A673 (cell line): ENCODE measurements at regions of chr2 and their contacts with region 1.

Region 1: GRCh38 chr2:47288864-47289263 is 114.1 kb upstream of the MSH2 start:
- DNase-seq: no peak
- H3K4me3 ChIP-seq: no peak overlapping the region
- H3K27ac ChIP-seq: no peak overlapping the region
- H3K4me1 ChIP-seq: no peaks in the 10 kb centered on the region
- H3K27me3 ChIP-seq: no peaks in the 10 kb centered on the region
- CTCF ChIP-seq: no peak

Region 2: DNA sequence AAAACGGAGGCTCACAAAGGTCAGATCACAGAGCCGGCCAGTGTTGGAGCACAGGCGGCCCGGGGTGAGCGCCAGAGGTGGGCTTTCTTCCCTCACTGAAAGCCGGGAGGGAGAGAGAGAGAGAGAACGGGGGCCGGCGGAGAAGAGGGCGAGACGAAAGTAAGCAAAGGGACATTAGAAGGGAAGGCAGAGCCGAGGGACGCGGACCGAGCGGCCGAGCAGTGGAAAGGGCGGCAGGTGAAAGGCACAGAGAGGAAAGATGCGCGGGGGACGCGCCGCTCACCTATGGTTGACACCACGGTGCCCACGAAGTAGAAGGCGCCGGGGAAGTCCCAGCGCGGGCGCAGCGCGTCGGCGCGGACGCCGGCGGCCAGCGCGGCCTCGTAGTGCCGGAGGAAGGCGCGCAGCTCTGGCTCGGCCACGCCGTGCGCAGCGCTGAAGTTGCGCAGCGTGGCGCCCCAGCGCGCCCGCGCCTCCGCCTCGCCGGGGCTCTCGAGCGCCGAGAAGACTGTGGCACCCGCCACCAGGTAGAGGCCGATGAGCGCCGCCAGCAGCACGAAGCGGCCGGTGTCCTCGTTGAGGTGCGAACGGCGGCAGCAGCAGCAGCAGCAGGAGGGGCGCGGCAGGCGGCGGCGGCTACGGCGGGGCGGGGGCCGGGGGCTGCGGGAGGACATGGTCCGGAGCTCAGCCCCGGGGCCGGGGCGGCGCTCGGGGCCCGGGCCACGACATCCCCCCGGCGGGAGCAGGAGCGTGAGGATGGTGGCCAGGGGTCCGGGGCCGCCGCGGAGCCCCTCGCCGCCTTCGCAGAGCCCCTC is 281.0 kb after region 1 on chr2:
- CTCF ChIA-PET with region 1: no interaction called
- POLR2A ChIA-PET with region 1: no interaction called
- intact Hi-C with region 1: no loop called
- DNase-seq: peak; percentile 24
- H3K4me3 ChIP-seq: peak overlapping the region; percentile 30
- H3K27ac ChIP-seq: no peak overlapping the region
- H3K4me1 ChIP-seq: no peaks in the 10 kb centered on the region
- H3K27me3 ChIP-seq: peaks cover 83% of the 10 kb centered on the region
- CTCF ChIP-seq: no peak

Region 3: GRCh38 chr2:47744074-47744473 is 455.2 kb after region 1 on chr2:
- CTCF ChIA-PET with region 1: no interaction called
- POLR2A ChIA-PET with region 1: interaction called, 17 read pairs
- intact Hi-C with region 1: no loop called
- DNase-seq: no peak
- H3K4me3 ChIP-seq: no peak overlapping the region
- H3K27ac ChIP-seq: no peak overlapping the region
- H3K4me1 ChIP-seq: no peaks in the 10 kb centered on the region
- H3K27me3 ChIP-seq: peaks cover 3% of the 10 kb centered on the region
- CTCF ChIP-seq: no peak